Naive thymus-derived CD4-positive, alpha-beta T cell (primary cell): ENCODE measurements at regions of chr18 and their contacts with region 1.

Region 1: GRCh38 chr18:63155169-63155852 is 164.3 kb downstream of the BCL2 start:
- DNase-seq: peak; percentile 64 to 89 (median 80)
- ATAC-seq: peak; percentile 85
- H3K4me3 ChIP-seq: peak overlapping the region; percentile 56
- H3K4me3 Mint-ChIP-seq: peak overlapping the region; percentile 78 to 99 (median 88)
- H3K27ac ChIP-seq: peak overlapping the region; percentile 90
- H3K27ac Mint-ChIP-seq: peak overlapping the region; percentile 77 to 99 (median 95)
- H3K4me1 ChIP-seq: peaks cover 89 to 92% of the 10 kb centered on the region in 2 donors
- H3K4me1 Mint-ChIP-seq: peaks cover 80 to 100% (median 100%) of the 10 kb centered on the region in 7 donors
- H3K27me3 ChIP-seq: no peaks in the 10 kb centered on the region
- H3K27me3 Mint-ChIP-seq: no peaks in the 10 kb centered on the region

Region 2: GRCh38 chr18:62399781-62400308 is 755.5 kb before region 1 on chr18:
- CTCF ChIA-PET with region 1: no interaction called
- POLR2A ChIA-PET with region 1: no interaction called
- intact Hi-C with region 1: no loop called
- DNase-seq: no peak
- ATAC-seq: no peak
- H3K4me3 ChIP-seq: no peak overlapping the region
- H3K4me3 Mint-ChIP-seq: no peak overlapping the region
- H3K27ac ChIP-seq: no peak overlapping the region
- H3K27ac Mint-ChIP-seq: peak overlapping the region in 1 of 9 donors; percentile 25
- H3K4me1 ChIP-seq: no peaks in the 10 kb centered on the region
- H3K4me1 Mint-ChIP-seq: peaks cover 0 to 41% (median 0%) of the 10 kb centered on the region in 7 donors
- H3K27me3 ChIP-seq: no peaks in the 10 kb centered on the region
- H3K27me3 Mint-ChIP-seq: peaks cover 0 to 4% (median 0%) of the 10 kb centered on the region in 5 donors

Region 3: GRCh38 chr18:62999392-62999791 is 155.9 kb before region 1 on chr18:
- CTCF ChIA-PET with region 1: no interaction called
- POLR2A ChIA-PET with region 1: no interaction called
- intact Hi-C with region 1: no loop called
- DNase-seq: no peak
- ATAC-seq: no peak
- H3K4me3 ChIP-seq: no peak overlapping the region
- H3K4me3 Mint-ChIP-seq: no peak overlapping the region
- H3K27ac ChIP-seq: no peak overlapping the region
- H3K27ac Mint-ChIP-seq: no peak overlapping the region
- H3K4me1 ChIP-seq: no peaks in the 10 kb centered on the region
- H3K4me1 Mint-ChIP-seq: no peaks in the 10 kb centered on the region
- H3K27me3 ChIP-seq: no peaks in the 10 kb centered on the region
- H3K27me3 Mint-ChIP-seq: peaks cover 5 to 24% (median 7%) of the 10 kb centered on the region in 5 donors

Region 4: GRCh38 chr18:63025251-63026090 is 129.8 kb before region 1 on chr18:
- CTCF ChIA-PET with region 1: no interaction called
- POLR2A ChIA-PET with region 1: no interaction called
- intact Hi-C with region 1: no loop called
- DNase-seq: no peak
- ATAC-seq: no peak
- H3K4me3 ChIP-seq: no peak overlapping the region
- H3K4me3 Mint-ChIP-seq: no peak overlapping the region
- H3K27ac ChIP-seq: no peak overlapping the region
- H3K27ac Mint-ChIP-seq: no peak overlapping the region
- H3K4me1 ChIP-seq: no peaks in the 10 kb centered on the region
- H3K4me1 Mint-ChIP-seq: no peaks in the 10 kb centered on the region
- H3K27me3 ChIP-seq: no peaks in the 10 kb centered on the region
- H3K27me3 Mint-ChIP-seq: peaks cover 0 to 14% (median 0%) of the 10 kb centered on the region in 5 donors

Region 5: DNA sequence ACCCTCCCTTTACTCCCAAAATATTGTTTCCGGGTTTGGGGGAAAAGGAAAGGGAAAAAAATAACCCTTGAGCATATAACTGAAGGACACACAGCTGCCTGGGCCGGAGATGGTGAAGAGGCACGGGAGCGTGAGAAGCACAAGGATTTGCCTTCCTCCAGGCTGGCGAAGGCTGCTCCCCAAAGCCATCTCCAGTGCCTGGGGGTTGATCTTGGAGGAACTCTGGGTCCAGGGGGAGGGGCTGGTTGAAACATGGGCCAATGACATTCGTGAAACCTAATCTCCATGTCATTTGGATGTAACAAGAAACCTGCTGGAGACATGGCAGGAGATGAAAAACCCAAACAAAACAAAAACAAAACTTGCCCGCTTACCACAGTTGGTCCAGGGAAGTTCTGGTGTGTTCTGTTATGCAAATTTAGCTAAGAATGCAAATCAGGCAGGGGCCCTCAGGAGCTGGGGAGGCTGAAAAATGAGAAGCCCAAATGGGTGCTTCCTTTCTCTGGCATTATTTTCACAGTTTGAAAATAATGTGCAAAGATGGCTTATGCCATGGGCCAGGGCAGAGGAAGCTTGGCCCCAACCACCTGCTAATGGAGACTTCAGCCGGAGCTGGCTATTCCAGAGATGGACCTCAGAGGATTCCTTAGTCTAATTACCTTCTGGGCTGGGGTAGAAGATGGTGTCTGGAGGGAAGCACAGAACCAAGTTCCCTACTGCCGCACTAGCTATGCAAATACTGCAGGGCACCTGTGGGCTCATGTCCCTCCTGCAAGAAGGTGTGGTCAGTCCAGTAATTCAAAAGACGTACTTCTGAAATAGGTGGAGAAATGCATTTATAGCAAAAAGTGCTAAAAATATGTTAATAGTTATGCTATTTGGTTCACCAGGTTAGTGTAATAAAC is 16.6 kb before region 1 on chr18:
- CTCF ChIA-PET with region 1: interaction called, 16 read pairs
- POLR2A ChIA-PET with region 1: interaction called, 26 read pairs
- intact Hi-C with region 1: loop called (anchors 1 kb)
- DNase-seq: no peak
- ATAC-seq: peak; percentile 23
- H3K4me3 ChIP-seq: peak overlapping the region; percentile 38
- H3K4me3 Mint-ChIP-seq: peak overlapping the region; percentile 78 to 96 (median 85)
- H3K27ac ChIP-seq: peak overlapping the region; percentile 63
- H3K27ac Mint-ChIP-seq: peak overlapping the region; percentile 28 to 94 (median 87)
- H3K4me1 ChIP-seq: peaks cover 25% of the 10 kb centered on the region in 2 donors
- H3K4me1 Mint-ChIP-seq: peaks cover 59 to 91% (median 79%) of the 10 kb centered on the region in 7 donors
- H3K27me3 ChIP-seq: no peaks in the 10 kb centered on the region
- H3K27me3 Mint-ChIP-seq: no peaks in the 10 kb centered on the region

Region 6: DNA sequence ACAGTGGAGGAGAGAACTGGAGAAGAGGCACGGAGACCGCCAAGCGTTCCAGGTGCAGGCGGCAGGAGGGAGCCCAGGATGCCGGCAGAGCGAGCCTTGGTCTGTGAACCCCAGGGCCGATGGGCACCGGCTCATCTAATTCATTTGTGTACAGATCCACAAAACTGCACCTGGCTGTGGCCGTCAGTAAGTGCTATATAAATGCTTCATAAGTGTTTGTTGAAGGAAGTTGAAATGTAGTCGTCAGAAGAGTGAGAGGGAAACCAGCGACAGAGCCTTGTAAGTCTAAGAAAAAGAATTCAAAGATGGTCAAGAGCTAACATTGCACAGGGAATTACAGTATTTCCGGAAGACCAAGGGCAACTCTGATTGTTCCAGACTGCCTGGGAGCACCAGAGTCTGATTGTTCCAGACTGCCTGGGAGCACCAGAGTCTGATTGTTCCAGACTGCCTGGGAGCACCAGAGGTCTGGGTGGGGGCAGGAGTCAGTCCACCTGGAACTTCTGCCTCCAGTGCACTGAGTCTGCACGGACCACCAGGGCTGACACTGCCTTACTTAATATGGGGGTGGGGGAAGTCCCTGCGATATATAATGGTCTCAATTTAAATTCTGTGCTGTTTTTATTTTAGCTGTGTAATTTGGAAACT is 52.0 kb after region 1 on chr18:
- CTCF ChIA-PET with region 1: interaction called, 5 read pairs
- POLR2A ChIA-PET with region 1: interaction called, 19 read pairs
- intact Hi-C with region 1: no loop called
- DNase-seq: no peak
- ATAC-seq: peak; percentile 46
- H3K4me3 ChIP-seq: peak overlapping the region; percentile 40
- H3K4me3 Mint-ChIP-seq: peak overlapping the region; percentile 72 to 94 (median 81)
- H3K27ac ChIP-seq: peak overlapping the region; percentile 63
- H3K27ac Mint-ChIP-seq: peak overlapping the region; percentile 77 to 96 (median 92)
- H3K4me1 ChIP-seq: peaks cover 58 to 97% of the 10 kb centered on the region in 2 donors
- H3K4me1 Mint-ChIP-seq: peaks cover 77 to 100% (median 95%) of the 10 kb centered on the region in 7 donors
- H3K27me3 ChIP-seq: no peaks in the 10 kb centered on the region
- H3K27me3 Mint-ChIP-seq: no peaks in the 10 kb centered on the region

Region 7: DNA sequence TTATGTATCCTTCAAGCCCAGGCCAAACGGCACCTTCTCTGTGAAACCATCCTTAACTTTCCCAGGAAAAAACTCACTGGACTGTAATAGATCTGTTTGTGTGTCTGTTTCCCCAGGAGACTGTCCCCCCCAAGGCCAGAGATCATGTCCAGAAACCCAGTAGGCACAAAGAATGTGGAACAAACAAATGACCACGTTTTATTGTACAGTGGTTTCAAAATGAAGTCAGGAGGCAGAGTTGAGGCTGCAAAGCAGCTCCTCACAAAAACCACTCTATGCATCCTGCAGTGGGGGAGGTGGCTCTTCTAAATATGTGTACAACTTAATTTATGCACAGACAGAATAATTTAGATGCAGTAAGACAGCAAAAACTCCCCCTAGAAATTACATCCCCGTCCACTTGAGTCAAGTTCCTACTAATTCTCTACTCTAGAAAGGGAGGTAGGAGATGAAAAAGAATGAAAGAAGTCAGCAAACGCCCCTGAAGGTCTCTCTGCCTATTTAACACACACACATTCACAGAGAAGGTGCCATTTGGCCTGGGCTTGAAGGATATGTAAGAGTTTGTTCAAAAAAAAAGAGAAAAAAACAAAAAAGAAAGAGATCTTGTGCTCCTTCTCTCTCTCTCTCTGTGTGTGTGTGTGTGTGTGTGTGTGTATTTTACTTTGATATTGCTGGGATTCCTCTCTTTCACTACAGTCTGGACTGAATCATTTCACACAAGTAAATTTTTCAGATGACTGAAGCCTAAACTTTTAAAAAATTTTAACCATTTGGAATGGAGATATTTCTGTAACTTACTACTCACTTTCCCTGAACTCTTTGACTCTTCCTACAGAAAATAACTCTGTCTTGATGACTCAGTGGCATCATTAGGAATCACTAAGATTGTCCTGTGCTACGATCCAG is 144.8 kb after region 1 on chr18:
- CTCF ChIA-PET with region 1: interaction called, 4 read pairs
- POLR2A ChIA-PET with region 1: interaction called, 13 read pairs
- intact Hi-C with region 1: loop called in 1 of 2 experiments (anchors 5 kb)
- DNase-seq: peak in 1 of 9 donors; percentile 36
- ATAC-seq: peak; percentile 52
- H3K4me3 ChIP-seq: no peak overlapping the region
- H3K4me3 Mint-ChIP-seq: peak overlapping the region; percentile 25 to 78 (median 63)
- H3K27ac ChIP-seq: peak overlapping the region; percentile 57
- H3K27ac Mint-ChIP-seq: peak overlapping the region; percentile 55 to 95 (median 89)
- H3K4me1 ChIP-seq: peaks cover 59 to 68% of the 10 kb centered on the region in 2 donors
- H3K4me1 Mint-ChIP-seq: peaks cover 58 to 87% (median 86%) of the 10 kb centered on the region in 7 donors
- H3K27me3 ChIP-seq: no peaks in the 10 kb centered on the region
- H3K27me3 Mint-ChIP-seq: no peaks in the 10 kb centered on the region